HCT116 (cell line): ENCODE measurements at regions of chr12 and their contacts with region 1.

Region 1: GRCh38 chr12:6533923-6534694 is at the start of gene GAPDH:
- DNase-seq: peak; percentile 96
- ATAC-seq: peak; percentile 52
- H3K4me3 ChIP-seq: peak within 1 kb of the TSS; percentile 96 to 98
- H3K27ac ChIP-seq: peak within 1 kb of the TSS; percentile 99
- H3K4me1 ChIP-seq: peaks cover 15 to 70% of the 10 kb centered on the region in 2 experiments
- H3K27me3 ChIP-seq: no peaks in the 10 kb centered on the region
- CTCF ChIP-seq: no peak
- POLR2A ChIP-seq: peak; percentile 99
- RAD21 ChIP-seq: no peak
- total RNA-seq, gene GAPDH: 5,901 TPM

Region 2: DNA sequence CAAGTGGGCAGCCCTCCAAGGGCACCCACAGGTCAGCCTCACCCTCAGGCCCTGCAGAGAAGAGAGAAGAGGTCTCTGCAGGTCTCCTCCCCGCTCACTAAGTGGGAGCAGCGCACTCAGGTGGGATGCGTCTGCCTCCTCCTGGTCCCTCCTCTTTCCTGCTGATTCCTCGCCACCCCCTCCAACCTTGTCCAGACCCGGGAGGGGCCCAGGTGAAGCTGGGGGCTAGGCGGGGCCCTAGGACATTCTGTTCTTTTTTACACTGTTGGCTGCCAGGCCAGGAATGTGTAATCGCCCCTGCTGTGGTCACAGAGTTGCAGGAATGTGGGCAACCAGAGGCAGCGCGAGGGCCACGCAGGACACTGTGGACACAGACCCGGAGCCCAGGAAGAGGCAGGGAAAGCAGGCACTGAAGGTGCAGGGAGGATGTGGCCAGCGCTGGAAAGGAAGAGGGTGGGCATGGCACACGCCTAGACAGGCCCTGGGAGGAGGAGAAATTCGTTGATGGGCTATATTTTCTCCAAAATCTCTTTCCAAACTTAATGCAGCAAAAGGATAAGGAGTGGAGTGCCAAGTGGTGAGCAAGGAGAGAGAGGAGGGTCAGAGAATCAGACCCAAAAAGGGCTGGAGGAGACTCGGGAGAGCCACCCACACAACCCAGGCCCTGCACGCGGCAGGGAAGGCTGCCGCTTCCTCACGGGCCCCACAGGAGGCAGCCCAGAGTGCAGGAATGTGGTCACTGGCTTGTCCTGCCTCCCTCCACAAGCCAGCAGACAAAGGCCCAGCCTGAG is 157.8 kb before region 1 on chr12:
- CTCF ChIA-PET with region 1: interaction called, 3 read pairs
- POLR2A ChIA-PET with region 1: interaction called, 10 read pairs
- RAD21 ChIA-PET with region 1: no interaction called
- intact Hi-C with region 1: no loop called
- DNase-seq: no peak
- ATAC-seq: peak; percentile 59
- H3K4me3 ChIP-seq: peak overlapping the region; percentile 54 to 58
- H3K27ac ChIP-seq: peak overlapping the region; percentile 100
- H3K4me1 ChIP-seq: peaks cover 68 to 75% of the 10 kb centered on the region in 2 experiments
- H3K27me3 ChIP-seq: no peaks in the 10 kb centered on the region
- CTCF ChIP-seq: peak in 2 of 3 experiments; percentile 51 to 63; a peak in 4 of 6 replicates
- POLR2A ChIP-seq: peak; percentile 36
- RAD21 ChIP-seq: no peak

Region 3: GRCh38 chr12:6493497-6494257 is 40.4 kb before region 1 on chr12 and contains the start of gene NCAPD2:
- CTCF ChIA-PET with region 1: no interaction called
- POLR2A ChIA-PET with region 1: interaction called, 8 read pairs
- RAD21 ChIA-PET with region 1: no interaction called
- intact Hi-C with region 1: loop called (anchors 2 kb)
- DNase-seq: peak; percentile 91
- ATAC-seq: peak; percentile 90
- H3K4me3 ChIP-seq: peak within 1 kb of the TSS; percentile 86 to 90
- H3K27ac ChIP-seq: peak within 1 kb of the TSS; percentile 97
- H3K4me1 ChIP-seq: peaks cover 12 to 19% of the 10 kb centered on the region in 2 experiments
- H3K27me3 ChIP-seq: no peaks in the 10 kb centered on the region
- CTCF ChIP-seq: peak in 1 of 3 experiments; percentile 24; a peak in 2 of 6 replicates
- POLR2A ChIP-seq: peak; percentile 27
- RAD21 ChIP-seq: no peak
- total RNA-seq, gene NCAPD2: 177 TPM

Region 4: DNA sequence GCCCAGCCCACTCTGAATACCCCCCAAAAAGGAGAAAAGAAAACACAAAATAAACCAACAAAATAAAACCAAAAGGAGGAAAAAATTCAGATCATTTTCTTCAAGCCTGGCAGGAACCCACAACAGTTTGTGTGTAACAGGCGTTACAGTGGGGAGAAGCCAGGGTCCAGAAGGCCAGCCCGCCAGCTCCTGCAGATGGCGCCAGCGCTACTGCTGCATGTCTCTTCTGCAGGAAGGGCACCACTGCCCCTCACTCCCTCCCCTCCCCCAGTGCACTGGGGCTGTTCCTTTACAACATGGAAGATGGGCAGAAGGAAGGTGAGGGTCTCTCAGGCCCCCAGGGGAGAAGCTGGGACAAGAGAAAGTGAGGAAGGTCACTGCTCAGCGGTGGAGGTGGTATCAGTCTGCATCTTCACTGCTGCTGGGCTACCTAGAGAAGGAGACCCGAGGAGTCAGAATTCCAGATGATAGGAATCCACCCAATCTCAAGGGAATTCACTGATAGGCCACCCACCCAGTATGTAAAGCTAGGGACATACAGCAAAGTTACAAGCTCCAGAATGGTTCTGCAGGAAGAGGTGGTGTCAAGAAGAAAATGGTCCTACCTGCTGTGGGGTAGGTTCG is 36.3 kb after region 1 on chr12:
- CTCF ChIA-PET with region 1: interaction called, 3 read pairs
- POLR2A ChIA-PET with region 1: interaction called, 14 read pairs
- RAD21 ChIA-PET with region 1: no interaction called
- intact Hi-C with region 1: no loop called
- DNase-seq: peak; percentile 37
- ATAC-seq: peak; percentile 49
- H3K4me3 ChIP-seq: no peak overlapping the region
- H3K27ac ChIP-seq: 0 out of 2 replicates have a peak overlapping the region, but pooled peaks have one; percentile 81
- H3K4me1 ChIP-seq: peaks cover 6 to 15% of the 10 kb centered on the region in 2 experiments; a peak in 3 of 4 replicates
- H3K27me3 ChIP-seq: no peaks in the 10 kb centered on the region
- CTCF ChIP-seq: peak; percentile 36 to 86 (median 82); a peak in 5 of 6 replicates
- POLR2A ChIP-seq: no peak
- RAD21 ChIP-seq: peak; percentile 71

Region 5: GRCh38 chr12:7354529-7354928 is 820.4 kb after region 1 on chr12:
- CTCF ChIA-PET with region 1: no interaction called
- POLR2A ChIA-PET with region 1: no interaction called
- RAD21 ChIA-PET with region 1: no interaction called
- intact Hi-C with region 1: no loop called
- DNase-seq: no peak
- ATAC-seq: no peak
- H3K4me3 ChIP-seq: no peak overlapping the region
- H3K27ac ChIP-seq: no peak overlapping the region
- H3K4me1 ChIP-seq: no peaks in the 10 kb centered on the region
- H3K27me3 ChIP-seq: no peaks in the 10 kb centered on the region
- CTCF ChIP-seq: no peak
- POLR2A ChIP-seq: no peak
- RAD21 ChIP-seq: no peak